Heart right ventricle (tissue), 16 donors: ENCODE measurements at regions of chr7 and their contacts with region 1.

Region 1: GRCh38 chr7:87806150-87806549 is 70.0 kb downstream of the SLC25A40 start:
- DNase-seq: no peak
- ATAC-seq: no peak
- H3K4me3 ChIP-seq: no peak overlapping the region
- H3K27ac ChIP-seq: no peak overlapping the region
- H3K4me1 ChIP-seq: no peaks in the 10 kb centered on the region
- H3K27me3 ChIP-seq: no peaks in the 10 kb centered on the region
- CTCF ChIP-seq: no peak

Region 2: DNA sequence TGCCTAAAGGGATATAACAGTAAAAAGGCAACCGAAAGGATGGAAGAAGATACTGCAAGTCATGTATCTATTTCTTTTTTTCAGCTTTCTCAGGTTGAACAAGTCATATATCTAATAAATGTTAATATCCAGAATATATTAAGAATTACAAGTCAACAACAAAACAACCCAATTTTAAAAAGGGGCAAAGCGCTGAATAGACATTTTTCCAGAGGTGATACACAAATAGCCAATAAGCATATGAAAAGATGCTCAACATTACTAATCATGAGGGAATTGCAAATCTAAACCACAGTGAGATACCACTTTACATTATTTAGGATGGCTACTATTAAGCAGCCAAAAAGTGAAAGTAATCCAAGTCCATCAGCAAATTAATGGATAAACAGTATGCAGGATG is 93.1 kb after region 1 on chr7:
- intact Hi-C with region 1: no loop called
- DNase-seq: no peak
- ATAC-seq: no peak
- H3K4me3 ChIP-seq: no peak overlapping the region
- H3K27ac ChIP-seq: no peak overlapping the region
- H3K4me1 ChIP-seq: no peaks in the 10 kb centered on the region
- H3K27me3 ChIP-seq: no peaks in the 10 kb centered on the region
- CTCF ChIP-seq: no peak

Region 3: DNA sequence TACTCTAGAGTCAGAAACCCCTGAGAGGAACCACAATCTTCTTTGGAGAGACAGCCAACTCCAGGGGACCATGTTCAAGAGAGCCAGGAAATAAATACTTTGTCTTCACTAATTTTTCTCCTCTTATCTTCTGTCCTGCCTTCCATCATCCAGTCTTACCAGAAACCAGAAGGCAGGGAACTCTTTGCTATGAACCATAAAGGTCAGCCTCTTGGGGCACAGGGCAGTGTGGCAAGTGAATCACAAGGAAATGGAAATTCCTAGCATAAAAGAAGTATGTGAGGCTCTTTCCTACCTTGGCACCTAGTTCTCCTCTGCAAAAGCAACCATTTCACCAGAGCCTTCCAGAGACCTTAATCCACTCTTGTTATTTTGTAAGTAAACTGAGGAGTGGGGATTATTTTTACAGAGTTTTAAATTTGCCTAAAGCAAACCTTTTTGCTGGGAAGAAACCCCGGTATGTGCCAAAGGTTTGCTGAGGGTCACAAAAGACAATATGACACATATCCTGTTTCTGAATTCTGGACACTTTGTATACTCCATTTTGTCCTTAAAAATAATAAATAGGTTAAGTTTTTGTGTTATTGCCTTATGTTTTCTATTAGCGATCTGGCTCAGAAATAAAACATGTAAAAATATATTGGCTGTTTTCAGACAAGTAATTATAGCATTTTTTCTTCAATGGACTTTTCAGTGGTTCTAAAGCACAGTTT is 215.0 kb after region 1 on chr7:
- intact Hi-C with region 1: loop called in 1 of 10 experiments (anchors 10 kb)
- DNase-seq: no peak
- ATAC-seq: no peak
- H3K4me3 ChIP-seq: no peak overlapping the region
- H3K27ac ChIP-seq: no peak overlapping the region
- H3K4me1 ChIP-seq: no peaks in the 10 kb centered on the region
- H3K27me3 ChIP-seq: no peaks in the 10 kb centered on the region
- CTCF ChIP-seq: no peak